Sigmoid colon (tissue), 7 donors: ENCODE measurements at regions of chr1 and their contacts with region 1.

Region 1: DNA sequence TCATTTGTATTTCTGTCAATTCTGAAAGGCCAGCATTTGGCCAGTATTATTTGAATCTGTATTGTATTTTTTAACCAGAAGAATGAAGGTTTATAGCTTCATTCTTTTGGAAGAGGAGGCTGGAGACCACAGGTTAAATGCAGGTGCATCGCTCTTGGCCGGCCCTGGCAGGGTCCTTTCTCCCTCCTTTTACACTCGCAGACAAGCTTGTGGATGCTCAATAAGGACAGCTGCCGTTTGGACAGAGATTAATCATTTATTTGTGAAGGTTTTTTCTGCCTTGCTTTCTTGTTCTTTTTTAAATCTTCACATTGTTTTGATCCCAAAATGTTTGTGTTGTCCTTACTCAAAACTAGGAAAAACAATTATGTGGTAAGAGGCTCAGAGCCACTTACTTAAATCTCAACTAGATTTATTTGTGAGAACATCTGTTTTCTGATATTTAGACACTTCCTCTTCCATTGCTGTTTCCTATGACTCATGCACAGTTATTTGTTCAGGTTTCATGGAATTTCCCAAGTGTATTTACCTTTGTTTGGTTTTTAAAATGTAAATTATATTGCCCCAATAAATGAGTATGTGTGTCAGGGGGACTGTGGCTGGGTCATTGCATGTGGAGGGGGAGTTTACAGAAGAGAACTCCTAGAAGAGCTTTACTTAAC is 46.7 kb upstream of the LAMC2 start:
- DNase-seq: no peak
- H3K4me3 ChIP-seq: no peak overlapping the region
- H3K27ac ChIP-seq: peak overlapping the region; percentile 71 to 82 (median 78)
- H3K4me1 ChIP-seq: peaks cover 0 to 55% (median 44%) of the 10 kb centered on the region in 4 donors
- H3K27me3 ChIP-seq: no peaks in the 10 kb centered on the region
- CTCF ChIP-seq: no peak
- EP300 ChIP-seq: no peak
- POLR2A ChIP-seq: no peak

Region 2: DNA sequence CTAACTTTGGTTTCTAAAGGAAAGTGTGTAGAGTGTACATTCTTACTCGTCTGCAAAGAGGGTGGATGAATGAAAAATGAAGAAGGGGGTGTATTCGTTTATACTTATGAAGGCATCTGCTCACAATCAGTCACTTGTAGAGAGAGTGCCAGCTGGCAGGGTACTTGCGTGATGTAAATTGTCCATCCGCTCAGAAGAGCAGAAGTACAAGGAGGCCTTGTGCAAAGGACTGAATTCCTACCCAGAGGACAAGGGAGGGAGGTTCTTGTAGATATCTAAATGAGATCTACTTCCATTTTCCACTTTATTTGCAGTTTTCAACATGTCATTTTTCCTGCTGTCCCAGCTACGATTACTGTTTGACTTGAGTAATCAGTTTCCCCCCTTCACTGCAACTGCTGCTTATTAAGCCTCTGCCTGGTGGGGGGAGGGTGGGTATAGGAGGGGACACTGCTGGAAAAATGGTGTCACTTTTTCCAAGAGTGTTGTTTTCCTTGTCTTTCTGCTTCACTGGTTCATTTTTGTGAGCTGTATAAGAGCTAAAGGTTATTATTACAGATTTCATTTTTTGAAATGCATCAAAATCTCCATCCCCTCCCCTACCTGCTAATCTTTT is 48.9 kb before region 1 on chr1:
- intact Hi-C with region 1: loop called (anchors 5 kb)
- DNase-seq: peak; percentile 94
- H3K4me3 ChIP-seq: no peak overlapping the region
- H3K27ac ChIP-seq: peak overlapping the region; percentile 61 to 84 (median 80)
- H3K4me1 ChIP-seq: peaks cover 0 to 88% (median 80%) of the 10 kb centered on the region in 4 donors
- H3K27me3 ChIP-seq: no peaks in the 10 kb centered on the region
- CTCF ChIP-seq: no peak
- EP300 ChIP-seq: peak in 2 of 4 donors; percentile 70 to 86
- POLR2A ChIP-seq: no peak

Region 3: DNA sequence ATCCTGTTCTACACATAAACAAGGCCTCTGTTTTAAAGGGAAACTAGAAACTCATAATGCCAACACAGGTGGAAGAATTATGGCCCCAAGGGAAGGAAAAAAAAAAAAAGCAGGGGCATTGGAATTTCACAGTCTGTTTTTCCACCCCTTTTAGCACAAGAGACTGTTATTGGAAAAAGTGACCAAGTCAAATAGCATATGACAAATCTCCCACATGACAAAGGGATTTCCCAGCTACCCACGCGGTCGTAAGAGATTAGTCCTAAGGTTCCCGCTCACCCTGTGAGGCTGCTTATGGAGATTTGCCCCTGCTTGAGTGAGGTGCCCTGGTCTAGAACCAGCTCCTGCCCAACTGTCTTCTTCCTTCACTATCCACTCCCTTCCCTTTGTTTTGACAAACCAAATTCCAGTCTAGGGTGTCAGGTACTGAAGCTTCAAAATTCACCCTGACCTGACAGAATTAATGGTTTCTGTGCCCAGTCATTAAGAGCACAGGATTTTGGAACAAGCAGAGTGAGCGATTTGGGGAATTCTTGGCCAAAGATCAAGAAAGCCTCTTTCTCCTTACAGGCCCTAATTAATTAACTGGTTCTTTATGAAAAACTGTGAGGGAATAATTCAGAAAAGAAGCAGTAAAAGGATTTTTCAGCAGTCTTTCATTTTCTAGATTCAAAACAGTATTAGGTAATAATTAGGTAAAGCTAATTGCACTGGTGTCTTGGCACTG is 171.5 kb after region 1 on chr1:
- intact Hi-C with region 1: loop called (anchors 5 kb)
- DNase-seq: no peak
- H3K4me3 ChIP-seq: no peak overlapping the region
- H3K27ac ChIP-seq: peak overlapping the region; percentile 66 to 81 (median 73)
- H3K4me1 ChIP-seq: peaks cover 0 to 62% (median 32%) of the 10 kb centered on the region in 4 donors
- H3K27me3 ChIP-seq: no peaks in the 10 kb centered on the region
- CTCF ChIP-seq: no peak
- EP300 ChIP-seq: peak in 1 of 4 donors; percentile 14
- POLR2A ChIP-seq: no peak